Posterior cingulate gyrus (tissue), 11 donors: ENCODE measurements at regions of chr22 and their contacts with region 1.

Region 1: GRCh38 chr22:20858615-20859416 is at the starts of genes PI4KA and SNAP29:
- DNase-seq: peak; percentile 97 to 100 (median 98)

Region 2: GRCh38 chr22:20449819-20450550 is 408.8 kb before region 1 on chr22:
- intact Hi-C with region 1: no loop called
- DNase-seq: peak in 3 of 10 donors; percentile 51 to 72 (median 68)

Region 3: GRCh38 chr22:20803696-20804324 is 55.0 kb before region 1 on chr22:
- intact Hi-C with region 1: no loop called
- DNase-seq: peak in 9 of 10 donors; percentile 26 to 95 (median 68)

Region 4: DNA sequence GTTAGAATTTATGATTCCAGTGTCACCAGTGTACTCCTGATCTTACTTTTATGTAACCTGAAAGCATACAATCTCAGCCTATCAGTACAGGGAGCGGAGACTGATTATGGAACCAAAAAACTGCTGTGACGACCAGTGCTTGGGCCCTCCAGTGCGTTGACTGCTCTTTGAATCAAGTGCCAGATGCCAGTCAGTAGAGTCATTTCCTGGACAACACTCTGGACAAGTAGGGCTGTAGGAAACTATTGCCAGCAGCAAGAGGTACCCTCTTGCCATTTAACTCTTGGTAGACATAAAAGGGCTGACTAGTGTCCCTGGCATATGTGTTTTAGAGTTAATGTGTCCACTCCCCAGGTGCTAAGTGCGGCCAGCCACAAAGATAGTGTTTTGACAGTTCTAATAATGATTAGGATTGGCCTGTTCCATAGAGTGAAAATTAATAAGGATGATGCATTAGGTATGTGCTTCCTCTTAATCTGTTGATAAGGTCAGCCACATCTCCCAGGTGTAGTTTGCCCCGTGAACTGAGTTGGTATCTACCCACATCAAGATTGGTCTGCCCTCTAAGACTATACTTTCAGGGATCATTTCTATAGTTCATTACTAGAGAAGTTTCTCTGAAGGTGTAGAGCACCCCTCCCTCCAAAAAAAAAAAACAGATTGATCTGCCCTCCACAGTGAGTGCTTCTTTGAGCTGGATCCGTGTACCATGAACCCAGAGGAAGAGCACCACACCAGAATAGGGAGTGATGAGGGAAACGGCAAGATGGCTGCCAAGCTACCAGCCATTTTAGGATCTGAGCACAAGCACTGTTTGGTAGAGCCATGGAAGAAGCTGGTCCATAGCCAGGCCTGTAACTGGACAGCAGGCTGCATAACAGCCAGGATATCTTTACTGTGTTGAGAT is 87.5 kb after region 1 on chr22:
- intact Hi-C with region 1: no loop called
- DNase-seq: peak in 2 of 10 donors; percentile 18 to 25

Region 5: GRCh38 chr22:20970939-20971657 is 112.3 kb after region 1 on chr22:
- intact Hi-C with region 1: no loop called
- DNase-seq: no peak

Region 6: GRCh38 chr22:20981787-20982562 is 123.2 kb after region 1 on chr22 and contains the start of gene LZTR1:
- intact Hi-C with region 1: loop called (anchors 5 kb)
- DNase-seq: peak; percentile 81 to 98 (median 86)

Region 7: DNA sequence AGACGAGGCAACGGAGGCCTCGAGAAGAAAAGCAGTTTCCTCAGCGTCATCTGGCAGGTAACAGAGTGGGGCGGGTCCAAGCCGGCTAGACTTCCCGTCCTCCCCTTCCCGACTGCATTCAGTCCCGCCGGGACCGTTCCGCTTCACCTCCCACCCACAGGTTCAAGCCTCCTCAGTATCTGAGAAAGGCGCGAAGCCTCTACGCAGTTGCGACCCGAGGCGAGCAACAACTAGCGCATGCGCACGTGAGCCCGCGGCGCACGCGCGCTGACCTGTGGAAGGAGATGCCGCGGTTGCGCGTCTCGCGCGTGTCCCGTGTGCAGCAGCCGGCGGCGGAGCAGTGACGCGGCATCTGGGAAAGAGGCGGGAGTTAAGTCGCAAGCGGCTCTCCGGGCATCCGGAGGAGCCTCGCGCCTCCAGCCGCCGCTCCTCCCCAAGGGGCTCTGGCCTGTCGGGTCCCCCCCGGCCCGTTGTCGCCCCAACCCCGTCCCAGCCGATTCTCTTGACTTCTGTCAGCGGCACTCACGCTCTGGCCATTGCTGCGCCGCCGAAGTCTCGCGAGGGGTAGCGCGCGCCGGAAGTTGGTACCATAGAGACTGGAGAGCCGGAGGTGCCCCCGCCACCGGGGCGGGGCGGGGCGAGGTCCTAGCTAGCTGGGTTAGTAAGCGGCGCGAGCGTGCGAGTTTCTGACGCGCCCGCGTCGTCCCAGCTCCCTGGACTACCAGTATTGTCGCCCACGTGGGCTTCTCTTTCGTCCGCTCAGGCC is 142.9 kb after region 1 on chr22 and contains the start of gene THAP7:
- intact Hi-C with region 1: loop called (anchors 5 kb)
- DNase-seq: peak; percentile 94 to 99 (median 97)